Activated naive CD4-positive, alpha-beta T cell treated with anti-CD3 and anti-CD28 coated beads for 36 hours (primary cell): ENCODE measurements at regions of chrX and their contacts with region 1.

Region 1: GRCh38 chrX:40169193-40170101 is 71.7 kb upstream of the BCOR start:
- DNase-seq: peak; percentile 92
- H3K4me3 Mint-ChIP-seq: peak overlapping the region; percentile 91
- H3K27ac Mint-ChIP-seq: peak overlapping the region; percentile 99
- H3K4me1 Mint-ChIP-seq: peaks cover 42% of the 10 kb centered on the region
- H3K27me3 Mint-ChIP-seq: no peaks in the 10 kb centered on the region

Region 2: GRCh38 chrX:38803586-38804431 is 1365.6 kb before region 1 on chrX:
- CTCF ChIA-PET with region 1: no interaction called
- intact Hi-C with region 1: loop called (anchors 5 kb)
- DNase-seq: peak; percentile 79
- H3K4me3 Mint-ChIP-seq: peak overlapping the region; percentile 87
- H3K27ac Mint-ChIP-seq: peak overlapping the region; percentile 97
- H3K4me1 Mint-ChIP-seq: peaks cover 17% of the 10 kb centered on the region
- H3K27me3 Mint-ChIP-seq: no peaks in the 10 kb centered on the region

Region 3: DNA sequence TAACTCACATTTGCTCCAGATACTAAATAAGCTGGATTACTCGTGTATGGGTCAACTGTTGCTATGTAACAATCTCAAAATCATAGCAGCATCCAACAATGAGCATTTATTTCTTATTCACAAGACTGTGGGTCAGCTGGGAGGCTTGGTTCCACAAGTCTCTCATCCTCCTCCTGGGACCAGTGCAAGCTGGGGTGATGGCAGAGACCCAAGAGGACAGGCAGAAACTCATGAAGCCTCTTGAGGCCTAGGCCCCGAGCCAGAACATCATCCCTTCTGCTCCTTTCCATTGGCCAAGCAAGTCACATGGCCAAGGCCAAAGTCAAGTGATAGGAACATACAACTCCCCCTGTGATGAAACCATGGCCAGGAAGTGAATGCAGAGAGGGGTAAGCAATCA is 493.8 kb before region 1 on chrX:
- CTCF ChIA-PET with region 1: no interaction called
- intact Hi-C with region 1: no loop called
- DNase-seq: no peak
- H3K4me3 Mint-ChIP-seq: no peak overlapping the region
- H3K27ac Mint-ChIP-seq: no peak overlapping the region
- H3K4me1 Mint-ChIP-seq: no peaks in the 10 kb centered on the region
- H3K27me3 Mint-ChIP-seq: no peaks in the 10 kb centered on the region

Region 4: GRCh38 chrX:39730662-39731397 is 438.6 kb before region 1 on chrX:
- CTCF ChIA-PET with region 1: no interaction called
- intact Hi-C with region 1: loop called (anchors 5 kb)
- DNase-seq: peak; percentile 75
- H3K4me3 Mint-ChIP-seq: peak overlapping the region; percentile 45
- H3K27ac Mint-ChIP-seq: no peak overlapping the region
- H3K4me1 Mint-ChIP-seq: peaks cover 17% of the 10 kb centered on the region
- H3K27me3 Mint-ChIP-seq: no peaks in the 10 kb centered on the region

Region 5: DNA sequence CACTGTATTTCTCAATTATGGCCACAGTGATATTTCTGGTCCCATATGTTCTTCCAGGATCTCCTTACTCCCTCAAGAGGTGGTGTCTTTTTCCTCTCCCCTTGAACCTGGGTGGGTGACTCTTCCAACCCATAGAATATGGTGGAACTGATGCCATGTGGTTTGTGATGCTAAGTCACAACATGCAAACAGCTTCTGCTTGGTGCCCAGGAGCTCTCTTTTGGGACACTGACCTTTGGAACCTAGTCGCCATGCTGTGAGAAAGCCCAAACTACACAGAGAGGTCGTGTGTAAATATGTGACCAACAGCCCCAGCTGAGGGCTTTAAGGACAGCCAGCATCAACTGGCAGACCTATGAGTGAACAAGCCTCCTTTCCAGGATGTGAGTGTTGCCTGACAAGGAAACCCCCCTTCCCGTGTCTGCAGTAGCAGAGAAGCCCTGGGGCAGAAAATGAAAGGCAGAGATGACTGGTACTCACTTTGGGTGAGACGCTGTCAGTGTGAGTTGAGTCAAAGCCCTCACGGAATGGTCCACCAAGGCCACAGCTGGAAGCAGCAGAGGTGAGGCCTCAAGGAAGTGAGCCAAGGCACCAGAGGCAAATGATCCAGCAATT is 295.1 kb before region 1 on chrX:
- CTCF ChIA-PET with region 1: no interaction called
- intact Hi-C with region 1: loop called (anchors 1 kb)
- DNase-seq: peak; percentile 89
- H3K4me3 Mint-ChIP-seq: no peak overlapping the region
- H3K27ac Mint-ChIP-seq: peak overlapping the region; percentile 89
- H3K4me1 Mint-ChIP-seq: peaks cover 49% of the 10 kb centered on the region
- H3K27me3 Mint-ChIP-seq: no peaks in the 10 kb centered on the region

Region 6: GRCh38 chrX:40097497-40098263 is 71.8 kb before region 1 on chrX and contains the start of gene BCOR:
- CTCF ChIA-PET with region 1: no interaction called
- intact Hi-C with region 1: loop called (anchors 1 kb)
- DNase-seq: peak; percentile 75
- H3K4me3 Mint-ChIP-seq: peak within 1 kb of the TSS; percentile 86
- H3K27ac Mint-ChIP-seq: peak within 1 kb of the TSS; percentile 82
- H3K4me1 Mint-ChIP-seq: peaks cover 24% of the 10 kb centered on the region
- H3K27me3 Mint-ChIP-seq: no peaks in the 10 kb centered on the region
- total RNA-seq, gene BCOR: 29.1 to 29.9 TPM

Region 7: DNA sequence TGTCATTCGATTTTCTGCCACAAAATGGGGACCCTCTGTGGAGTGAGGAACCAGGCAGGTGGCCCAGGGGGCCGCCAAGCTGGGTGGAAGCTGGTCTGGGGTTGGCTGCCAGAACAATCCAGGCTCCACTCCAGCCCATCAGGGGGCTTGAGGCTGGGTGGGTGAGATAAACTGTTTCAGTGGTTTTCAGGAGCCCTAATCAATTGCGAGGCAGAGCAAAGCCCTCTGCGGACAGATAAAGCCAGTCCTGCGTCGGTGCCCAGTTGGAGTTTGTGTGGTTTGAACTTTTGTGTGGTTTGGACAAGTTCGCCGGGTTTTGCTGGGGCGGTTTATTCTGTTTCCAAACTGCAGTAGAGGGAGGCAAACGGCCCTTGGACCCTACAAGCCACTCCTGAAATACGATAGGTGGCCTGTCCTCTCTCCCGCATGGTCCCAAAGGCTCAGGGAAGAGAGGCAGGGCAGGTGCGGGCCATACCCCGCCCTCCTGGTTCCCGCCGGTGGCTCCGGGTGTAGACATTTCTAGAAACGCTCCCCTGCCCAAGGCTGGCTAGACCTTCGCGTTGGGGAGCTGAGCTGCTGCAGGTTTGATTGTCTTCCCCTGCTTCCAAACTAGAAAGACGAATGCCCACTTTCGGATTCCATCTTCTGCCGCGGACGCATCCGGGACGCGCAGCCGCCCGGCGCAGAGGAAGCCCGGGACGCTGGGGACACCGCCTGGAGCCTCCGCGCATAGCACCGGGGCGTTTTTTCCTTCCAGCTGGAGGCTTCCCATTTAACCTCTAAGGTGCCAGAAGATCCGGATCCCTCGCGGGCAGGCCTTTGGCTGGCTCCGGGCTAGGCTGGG is 97.3 kb after region 1 on chrX:
- CTCF ChIA-PET with region 1: no interaction called
- intact Hi-C with region 1: loop called (anchors 1 kb)
- DNase-seq: peak; percentile 69
- H3K4me3 Mint-ChIP-seq: peak overlapping the region; percentile 70
- H3K27ac Mint-ChIP-seq: no peak overlapping the region
- H3K4me1 Mint-ChIP-seq: peaks cover 8% of the 10 kb centered on the region
- H3K27me3 Mint-ChIP-seq: no peaks in the 10 kb centered on the region

Region 8: GRCh38 chrX:40402831-40403533 is 233.5 kb after region 1 on chrX:
- CTCF ChIA-PET with region 1: no interaction called
- intact Hi-C with region 1: no loop called
- DNase-seq: peak; percentile 37
- H3K4me3 Mint-ChIP-seq: no peak overlapping the region
- H3K27ac Mint-ChIP-seq: no peak overlapping the region
- H3K4me1 Mint-ChIP-seq: no peaks in the 10 kb centered on the region
- H3K27me3 Mint-ChIP-seq: no peaks in the 10 kb centered on the region

Region 9: DNA sequence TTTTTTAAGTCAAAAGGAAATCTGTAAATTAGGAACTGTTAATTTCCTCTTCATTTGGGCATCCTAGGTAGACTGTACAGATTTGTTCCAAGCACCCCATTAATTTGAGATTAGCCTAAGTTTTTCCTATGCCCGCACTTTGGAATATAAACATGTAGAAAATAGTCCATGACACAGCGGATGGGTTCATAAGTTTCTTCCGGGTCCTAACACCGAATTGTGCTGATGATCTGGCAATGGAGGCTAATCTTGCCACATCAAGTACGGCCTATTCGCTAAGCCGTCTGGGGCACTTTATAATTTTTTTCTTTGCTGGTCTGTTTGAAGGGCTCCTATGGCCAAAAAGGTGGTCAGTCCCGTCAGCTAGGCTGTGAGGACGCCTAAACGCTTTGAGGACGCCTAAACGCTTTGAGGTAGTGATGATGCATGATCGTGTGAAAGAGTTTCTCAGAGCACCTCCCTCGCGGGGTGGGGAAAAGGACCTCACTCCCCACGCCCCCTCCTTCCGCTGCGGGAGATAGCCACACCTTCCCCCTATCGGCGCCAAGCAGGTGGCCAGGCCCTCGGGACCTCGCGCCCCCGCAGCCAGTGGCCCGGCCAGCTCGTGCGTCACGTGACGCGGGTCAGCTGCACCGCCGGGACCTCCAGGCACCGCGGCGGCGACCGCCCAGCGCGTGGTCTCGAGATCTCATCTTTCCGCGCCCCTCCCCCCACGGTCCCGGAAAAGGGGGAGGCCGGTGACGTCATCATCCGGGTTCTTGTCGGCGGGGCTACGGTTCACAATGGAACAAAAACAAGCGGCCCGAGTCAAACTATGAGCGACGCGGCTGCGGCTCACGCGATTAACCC is 914.8 kb after region 1 on chrX:
- CTCF ChIA-PET with region 1: no interaction called
- intact Hi-C with region 1: loop called (anchors 10 kb)
- DNase-seq: peak; percentile 96
- H3K4me3 Mint-ChIP-seq: peak overlapping the region; percentile 89
- H3K27ac Mint-ChIP-seq: peak overlapping the region; percentile 100
- H3K4me1 Mint-ChIP-seq: peaks cover 22% of the 10 kb centered on the region
- H3K27me3 Mint-ChIP-seq: no peaks in the 10 kb centered on the region